ENCODE measurements at regions of chr5 and their contacts with region 1.

Region 1: GRCh38 chr5:93078082-93079038 is 502.7 kb downstream of the NR2F1-AS1 start:
- DNase-seq: peak; percentile 100
- ATAC-seq: peak; percentile 92
- H3K4me3 ChIP-seq: peak overlapping the region; percentile 55
- H3K27ac ChIP-seq: peak overlapping the region; percentile 90
- H3K4me1 ChIP-seq: peaks cover 43% of the 10 kb centered on the region
- H3K27me3 ChIP-seq: no peaks in the 10 kb centered on the region
- CTCF ChIP-seq: no peak

Region 2: DNA sequence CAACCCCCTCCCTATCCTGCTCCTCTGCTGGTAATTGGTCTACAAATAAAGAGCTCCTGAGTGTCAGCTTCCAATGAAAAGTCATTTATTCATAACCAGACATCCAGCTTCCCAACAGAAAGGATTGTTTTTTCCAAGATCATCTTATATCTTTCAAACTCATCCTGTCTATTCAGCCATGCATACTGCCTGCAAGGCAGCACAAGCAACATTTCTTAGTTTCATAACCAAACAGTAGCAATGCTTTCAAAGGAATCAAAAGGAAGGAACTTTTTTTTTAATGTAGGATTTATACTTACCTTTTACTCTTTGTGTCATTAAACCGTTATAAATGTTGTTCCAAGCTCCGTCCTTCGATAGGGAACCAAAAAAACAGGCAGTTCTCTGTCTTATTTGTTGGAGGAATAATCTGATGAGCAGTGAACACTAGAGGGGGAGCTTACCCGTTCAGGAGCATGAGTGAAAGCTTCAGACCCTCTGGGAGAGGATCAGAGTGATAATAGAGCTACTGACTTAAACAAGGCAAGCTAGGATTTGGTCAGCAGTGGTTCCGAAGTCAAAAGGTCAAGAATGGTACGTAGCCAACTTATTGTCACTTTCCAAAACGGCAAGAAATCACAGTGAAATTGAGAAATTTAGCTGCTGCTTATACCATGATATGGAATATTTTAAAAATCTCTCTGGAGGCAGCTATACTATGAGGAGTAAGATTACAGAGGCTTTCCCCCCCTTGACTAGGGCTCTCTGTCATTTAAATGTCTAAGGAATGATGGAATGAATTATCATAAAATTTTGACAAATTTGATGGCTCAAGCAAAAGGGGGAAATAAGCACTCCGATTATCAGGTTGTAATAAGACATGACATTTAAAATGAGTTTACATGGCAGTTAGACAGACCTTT is 390.3 kb before region 1 on chr5:
- CTCF ChIA-PET with region 1: no interaction called
- POLR2A ChIA-PET with region 1: no interaction called
- intact Hi-C with region 1: loop called (anchors 10 kb)
- DNase-seq: peak; percentile 43
- ATAC-seq: peak; percentile 74
- H3K4me3 ChIP-seq: no peak overlapping the region
- H3K27ac ChIP-seq: no peak overlapping the region
- H3K4me1 ChIP-seq: no peaks in the 10 kb centered on the region; the same call in 1 of the 2 replicates
- H3K27me3 ChIP-seq: no peaks in the 10 kb centered on the region
- CTCF ChIP-seq: peak; percentile 62

Region 3: DNA sequence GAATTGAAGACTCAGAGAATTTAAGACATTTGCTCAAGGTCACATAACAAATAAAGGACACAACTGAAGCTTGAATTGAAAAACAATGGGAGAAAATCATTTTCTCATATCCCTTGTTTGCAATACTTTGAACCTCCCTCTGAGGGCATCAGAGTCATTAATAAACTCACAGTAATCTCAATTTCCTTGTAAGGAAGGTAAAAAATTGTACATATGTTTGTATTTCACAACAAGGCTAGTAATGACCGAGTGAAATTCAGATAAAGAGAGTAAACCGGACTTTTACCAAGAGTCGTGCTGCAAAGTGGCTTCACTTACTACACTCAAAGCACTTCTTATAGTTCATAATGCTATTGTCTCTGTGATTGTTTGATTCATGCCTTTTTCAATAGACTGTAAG is 162.3 kb before region 1 on chr5:
- CTCF ChIA-PET with region 1: no interaction called
- POLR2A ChIA-PET with region 1: no interaction called
- intact Hi-C with region 1: loop called (anchors 10 kb)
- DNase-seq: peak; percentile 56
- ATAC-seq: no peak
- H3K4me3 ChIP-seq: no peak overlapping the region
- H3K27ac ChIP-seq: no peak overlapping the region
- H3K4me1 ChIP-seq: peaks cover 13% of the 10 kb centered on the region; the same call in 1 of the 2 replicates
- H3K27me3 ChIP-seq: no peaks in the 10 kb centered on the region
- CTCF ChIP-seq: peak; percentile 63; the same call in 1 of the 2 replicates

Region 4: GRCh38 chr5:92998456-92998855 is 79.9 kb before region 1 on chr5:
- CTCF ChIA-PET with region 1: no interaction called
- POLR2A ChIA-PET with region 1: no interaction called
- intact Hi-C with region 1: no loop called
- DNase-seq: no peak
- ATAC-seq: no peak
- H3K4me3 ChIP-seq: no peak overlapping the region
- H3K27ac ChIP-seq: no peak overlapping the region
- H3K4me1 ChIP-seq: no peaks in the 10 kb centered on the region
- H3K27me3 ChIP-seq: no peaks in the 10 kb centered on the region
- CTCF ChIP-seq: no peak

Region 5: DNA sequence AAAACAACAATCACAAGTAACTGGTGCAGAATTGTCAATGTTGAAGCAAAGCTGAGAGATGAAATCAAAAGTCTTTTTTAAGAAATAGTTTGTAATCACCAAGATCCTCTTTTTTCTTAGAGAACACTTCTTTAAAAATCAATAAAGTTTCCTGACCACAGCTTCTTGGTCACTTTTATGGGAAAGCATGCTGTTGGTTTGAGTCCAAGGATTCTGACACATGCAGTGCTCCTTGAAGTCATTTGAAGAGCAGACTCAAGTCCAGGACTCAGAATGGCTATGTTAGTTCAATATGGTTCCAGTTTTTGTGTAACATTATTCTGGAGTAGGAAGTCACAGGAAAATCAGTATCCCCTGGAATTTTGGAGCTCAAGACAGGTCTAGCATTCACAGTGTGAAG is 22.1 kb after region 1 on chr5:
- CTCF ChIA-PET with region 1: interaction called, 11 read pairs
- POLR2A ChIA-PET with region 1: no interaction called
- intact Hi-C with region 1: no loop called
- DNase-seq: peak; percentile 85
- ATAC-seq: peak; percentile 77
- H3K4me3 ChIP-seq: no peak overlapping the region
- H3K27ac ChIP-seq: peak overlapping the region; percentile 64
- H3K4me1 ChIP-seq: peaks cover 20% of the 10 kb centered on the region
- H3K27me3 ChIP-seq: no peaks in the 10 kb centered on the region
- CTCF ChIP-seq: no peak

Region 6: GRCh38 chr5:93189707-93190120 is 111.4 kb after region 1 on chr5:
- CTCF ChIA-PET with region 1: no interaction called
- POLR2A ChIA-PET with region 1: no interaction called
- intact Hi-C with region 1: loop called (anchors 5 kb)
- DNase-seq: peak; percentile 97
- ATAC-seq: peak; percentile 66
- H3K4me3 ChIP-seq: no peak overlapping the region
- H3K27ac ChIP-seq: peak overlapping the region; percentile 88
- H3K4me1 ChIP-seq: peaks cover 66% of the 10 kb centered on the region
- H3K27me3 ChIP-seq: no peaks in the 10 kb centered on the region
- CTCF ChIP-seq: no peak

Region 7: DNA sequence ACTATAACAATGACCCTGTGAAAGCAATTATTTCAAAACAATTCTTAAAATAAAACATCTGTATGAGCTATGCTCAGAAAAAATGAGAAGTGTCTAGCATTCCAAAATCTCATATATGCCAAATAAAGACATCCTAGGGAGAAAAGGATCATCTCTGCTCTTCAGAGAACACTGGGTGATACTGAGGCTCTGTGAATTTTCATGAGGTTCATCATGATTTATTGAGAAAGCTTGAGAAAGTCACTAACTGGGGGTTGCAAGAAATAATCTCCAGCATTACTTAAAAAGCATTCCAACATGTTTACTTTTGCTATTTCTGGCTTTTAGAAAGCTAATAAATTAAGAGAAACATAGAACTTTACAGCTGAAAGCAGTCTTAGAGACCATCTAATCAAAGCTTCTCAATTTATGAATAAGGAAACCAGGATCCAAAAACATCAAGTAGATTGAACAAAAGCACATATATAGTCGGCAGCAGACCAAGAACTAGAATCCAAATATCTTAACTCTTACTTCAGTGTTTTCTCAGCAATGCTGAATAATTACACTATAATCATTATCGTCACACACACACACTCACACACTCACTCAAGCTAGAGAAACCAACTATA is 129.9 kb after region 1 on chr5:
- CTCF ChIA-PET with region 1: no interaction called
- POLR2A ChIA-PET with region 1: no interaction called
- intact Hi-C with region 1: no loop called
- DNase-seq: no peak
- ATAC-seq: no peak
- H3K4me3 ChIP-seq: no peak overlapping the region
- H3K27ac ChIP-seq: no peak overlapping the region
- H3K4me1 ChIP-seq: no peaks in the 10 kb centered on the region
- H3K27me3 ChIP-seq: no peaks in the 10 kb centered on the region
- CTCF ChIP-seq: no peak

Region 8: GRCh38 chr5:93267736-93268135 is 189.4 kb after region 1 on chr5:
- CTCF ChIA-PET with region 1: no interaction called
- POLR2A ChIA-PET with region 1: no interaction called
- intact Hi-C with region 1: no loop called
- DNase-seq: no peak
- ATAC-seq: no peak
- H3K4me3 ChIP-seq: no peak overlapping the region
- H3K27ac ChIP-seq: no peak overlapping the region
- H3K4me1 ChIP-seq: peaks cover under 1% of the 10 kb centered on the region; the same call in 1 of the 2 replicates
- H3K27me3 ChIP-seq: no peaks in the 10 kb centered on the region
- CTCF ChIP-seq: no peak

Region 9: DNA sequence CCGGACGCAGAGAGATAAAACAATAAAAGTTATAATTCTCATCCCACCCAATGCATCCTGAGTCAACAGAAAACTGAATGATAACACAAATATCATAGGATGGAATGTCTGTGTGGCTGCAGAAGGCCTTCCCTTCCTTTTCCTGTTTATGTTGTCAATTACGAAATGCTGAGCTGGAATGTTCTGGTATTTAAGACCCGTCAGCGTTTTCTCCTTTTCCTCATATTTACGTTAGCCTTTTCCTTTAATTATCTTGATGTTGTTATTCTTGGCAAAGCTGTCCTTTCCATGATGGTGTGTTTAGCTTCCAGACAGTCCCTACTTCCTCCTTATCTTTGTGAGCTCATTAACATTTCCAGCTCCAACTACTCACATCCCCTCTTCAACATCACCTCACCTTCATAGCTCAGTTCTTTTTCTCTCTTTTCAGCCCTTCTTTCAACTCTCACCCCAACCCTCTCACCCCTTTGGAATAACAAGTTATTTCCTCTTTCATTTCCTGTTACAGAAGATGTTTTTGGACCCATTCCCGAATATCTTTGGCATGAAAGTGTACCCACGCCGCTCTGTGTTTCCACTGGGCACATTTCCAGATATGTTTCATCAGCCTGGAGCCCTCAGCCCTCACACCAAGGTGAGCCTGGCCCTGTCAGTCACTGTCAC is 281.1 kb after region 1 on chr5:
- CTCF ChIA-PET with region 1: no interaction called
- POLR2A ChIA-PET with region 1: no interaction called
- intact Hi-C with region 1: loop called (anchors 5 kb)
- DNase-seq: peak; percentile 98
- ATAC-seq: peak; percentile 58
- H3K4me3 ChIP-seq: peak overlapping the region; percentile 40
- H3K27ac ChIP-seq: peak overlapping the region; percentile 78
- H3K4me1 ChIP-seq: peaks cover 58% of the 10 kb centered on the region
- H3K27me3 ChIP-seq: no peaks in the 10 kb centered on the region
- CTCF ChIP-seq: no peak